ENCODE measurements at regions of chr2 and their contacts with region 1.

Region 1: DNA sequence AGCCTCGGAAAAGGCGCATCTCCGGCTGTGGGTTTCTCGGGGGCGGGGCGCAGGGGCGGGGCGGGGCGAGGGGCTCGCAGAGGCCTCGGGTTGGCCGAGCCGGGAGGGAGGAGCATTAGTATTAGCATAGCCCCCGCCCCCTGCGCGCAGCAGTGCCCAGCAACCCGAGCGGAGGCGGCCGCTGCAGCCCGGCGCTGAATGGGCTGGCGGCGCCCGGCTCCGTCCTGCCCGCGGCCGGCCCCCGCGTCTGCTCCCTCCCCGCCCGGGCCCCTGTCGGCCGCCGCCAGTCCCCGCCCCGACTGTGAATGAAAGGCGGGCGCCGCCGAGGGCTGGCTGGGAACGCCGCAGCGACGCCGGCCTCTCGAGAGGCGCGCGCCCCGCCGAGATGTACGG is at the start of gene EFR3B:
- DNase-seq: peak; percentile 96 to 97
- H3K4me3 ChIP-seq: peak within 1 kb of the TSS; percentile 59 to 77
- H3K27ac ChIP-seq: peak within 1 kb of the TSS; percentile 47 to 69
- H3K4me1 ChIP-seq: peaks cover 0 to 26% (median 14%) of the 10 kb centered on the region in 4 donors
- H3K27me3 ChIP-seq: no peaks in the 10 kb centered on the region
- CTCF ChIP-seq: no peak

Region 2: DNA sequence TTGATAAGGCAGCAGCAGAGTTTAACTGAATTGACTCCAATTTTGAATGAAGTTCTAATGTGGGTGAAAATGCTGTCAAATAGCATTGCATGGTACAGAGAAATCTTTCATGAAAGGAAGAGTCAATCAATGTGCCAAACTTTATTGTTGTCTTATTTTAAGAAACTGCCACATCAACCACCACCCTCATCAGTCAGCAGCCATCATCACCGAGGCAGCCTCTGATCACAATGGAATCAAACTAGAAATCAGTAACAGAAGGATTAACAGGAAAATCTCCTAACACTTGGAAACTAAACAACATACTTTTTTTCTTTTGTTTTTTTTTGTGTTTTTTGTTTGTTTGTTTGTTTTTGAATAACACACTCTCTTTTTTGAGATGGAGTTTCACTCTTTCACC is 80.0 kb before region 1 on chr2:
- intact Hi-C with region 1: no loop called
- DNase-seq: no peak
- H3K4me3 ChIP-seq: no peak overlapping the region
- H3K27ac ChIP-seq: no peak overlapping the region
- H3K4me1 ChIP-seq: no peaks in the 10 kb centered on the region
- H3K27me3 ChIP-seq: no peaks in the 10 kb centered on the region
- CTCF ChIP-seq: no peak

Region 3: GRCh38 chr2:24977631-24978030 is 64.3 kb before region 1 on chr2:
- intact Hi-C with region 1: loop called (anchors 5 kb)
- DNase-seq: no peak
- H3K4me3 ChIP-seq: no peak overlapping the region
- H3K27ac ChIP-seq: no peak overlapping the region
- H3K4me1 ChIP-seq: peaks cover 0 to 23% (median 8%) of the 10 kb centered on the region in 4 donors
- H3K27me3 ChIP-seq: no peaks in the 10 kb centered on the region
- CTCF ChIP-seq: no peak

Measured in tibial artery (tissue), 4 donors.